CD4-positive, alpha-beta memory T cell (primary cell): ENCODE measurements at regions of chr4 and their contacts with region 1.

Region 1: DNA sequence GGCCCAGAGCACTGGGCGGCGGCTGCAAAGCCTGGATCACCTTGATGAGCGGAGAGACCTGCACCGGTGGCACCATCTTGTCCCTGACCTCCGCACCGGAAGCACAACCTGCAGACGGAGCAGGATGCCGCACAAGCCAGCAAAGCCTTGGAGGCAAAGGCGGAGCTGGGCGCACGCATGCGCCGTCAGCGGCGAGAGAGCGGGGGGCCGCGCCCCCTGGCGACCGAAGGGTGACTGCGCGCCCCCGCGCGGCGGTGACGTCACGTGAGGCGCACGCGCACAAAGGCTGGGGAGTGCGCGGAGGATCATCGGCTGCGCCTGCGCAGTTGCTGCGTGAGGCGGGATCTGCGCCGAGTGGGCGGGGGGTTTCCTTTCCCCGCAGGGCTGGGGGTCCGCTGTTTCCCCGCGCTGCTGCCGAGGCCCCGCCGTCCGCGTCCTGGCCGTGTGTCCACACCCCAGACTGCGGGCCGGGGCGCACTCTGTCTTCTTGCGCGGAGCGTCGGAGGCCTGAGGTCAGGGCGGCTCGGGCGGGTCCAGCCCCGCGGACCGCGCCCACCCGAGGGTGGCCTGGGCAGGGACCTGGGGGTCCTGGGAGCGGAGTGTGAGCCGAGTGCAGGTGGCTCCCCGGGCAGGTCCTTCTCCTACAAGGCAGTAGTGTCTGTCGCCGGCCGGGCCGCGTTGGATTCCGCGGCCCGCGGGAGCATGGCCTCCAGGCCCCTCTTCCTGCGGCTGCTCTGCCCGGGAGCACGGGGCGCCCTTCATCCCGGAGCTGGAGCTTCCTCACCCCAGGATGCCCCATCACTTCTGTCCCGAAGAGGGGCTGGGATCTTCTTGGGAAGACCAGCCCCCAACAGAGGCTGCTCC is at the starts of genes ATP5ME and MYL5:
- DNase-seq: peak; percentile 98 to 100 (median 98)
- H3K4me3 ChIP-seq: peak within 1 kb of the TSS; percentile 57 to 76
- H3K4me3 Mint-ChIP-seq: peak within 1 kb of the TSS; percentile 86 to 93 (median 90)
- H3K27ac ChIP-seq: peak within 1 kb of the TSS; percentile 99
- H3K27ac Mint-ChIP-seq: peak within 1 kb of the TSS; percentile 85 to 94 (median 92)
- H3K4me1 ChIP-seq: peaks cover 16% of the 10 kb centered on the region
- H3K4me1 Mint-ChIP-seq: peaks cover 2 to 18% (median 10%) of the 10 kb centered on the region in 4 donors
- H3K27me3 ChIP-seq: no peaks in the 10 kb centered on the region
- H3K27me3 Mint-ChIP-seq: no peaks in the 10 kb centered on the region
- total RNA-seq, gene ATP5ME: 137 to 152 TPM
- total RNA-seq, gene MYL5: 12.1 to 15.4 TPM

Region 2: GRCh38 chr4:337143-337931 is 337.1 kb before region 1 on chr4 and contains the start of gene ZNF141:
- CTCF ChIA-PET with region 1: no interaction called
- POLR2A ChIA-PET with region 1: no interaction called
- intact Hi-C with region 1: loop called (anchors 5 kb)
- DNase-seq: peak; percentile 90 to 97 (median 94)
- H3K4me3 ChIP-seq: peak within 1 kb of the TSS; percentile 68 to 99
- H3K4me3 Mint-ChIP-seq: peak within 1 kb of the TSS; percentile 96 to 100 (median 99)
- H3K27ac ChIP-seq: peak within 1 kb of the TSS; percentile 78
- H3K27ac Mint-ChIP-seq: peak within 1 kb of the TSS; percentile 98 to 99 (median 99)
- H3K4me1 ChIP-seq: peaks cover 15% of the 10 kb centered on the region
- H3K4me1 Mint-ChIP-seq: peaks cover 19 to 54% (median 35%) of the 10 kb centered on the region in 4 donors
- H3K27me3 ChIP-seq: no peaks in the 10 kb centered on the region
- H3K27me3 Mint-ChIP-seq: peaks cover 0 to 3% of the 10 kb centered on the region in 2 donors
- total RNA-seq, gene ZNF141: 55.2 to 59.6 TPM

Region 3: DNA sequence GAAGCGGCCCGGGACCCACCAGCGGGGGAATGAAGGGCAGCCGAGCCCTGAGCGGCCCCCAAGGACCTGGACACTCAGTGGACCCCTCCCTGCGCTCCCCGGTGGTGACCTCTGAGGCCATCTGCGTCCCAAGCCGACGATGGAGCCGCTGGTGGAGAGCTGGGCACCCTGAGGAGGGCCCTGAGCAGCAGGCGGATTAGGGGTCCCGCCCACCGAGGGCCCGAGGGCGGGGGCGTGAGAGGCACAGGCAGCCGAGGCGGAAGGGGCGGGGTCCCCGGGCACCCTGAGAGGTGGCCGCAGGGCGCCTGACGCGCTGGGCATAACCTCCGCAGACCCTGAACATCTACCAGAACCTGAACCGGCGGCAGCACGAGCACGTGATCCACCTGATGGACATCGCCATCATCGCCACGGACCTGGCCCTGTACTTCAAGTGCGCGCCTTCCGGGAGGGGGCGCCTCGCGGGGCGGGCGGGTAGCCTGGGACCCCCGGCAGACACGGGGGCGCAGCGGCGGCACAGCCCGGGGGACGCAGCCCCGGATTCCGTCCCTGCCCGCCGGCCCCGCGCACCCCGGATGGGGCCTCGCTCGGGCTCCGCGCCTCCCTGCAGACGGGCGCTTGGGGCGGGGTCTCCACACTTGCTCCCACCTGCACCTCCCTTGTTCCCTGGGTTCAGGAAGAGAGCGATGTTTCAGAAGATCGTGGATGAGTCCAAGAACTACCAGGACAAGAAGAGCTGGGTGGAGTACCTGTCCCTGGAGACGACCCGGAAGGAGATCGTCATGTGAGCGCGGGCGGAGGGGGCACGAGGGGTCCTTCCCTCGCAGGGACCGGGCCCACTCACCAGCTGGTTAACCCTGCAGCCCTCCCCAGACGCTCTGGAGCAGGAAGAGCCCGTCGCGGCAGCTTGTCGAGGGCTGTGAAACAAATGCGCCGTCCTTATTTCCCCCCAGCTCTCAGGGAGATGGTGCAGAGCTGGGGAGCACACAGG is 10.7 kb before region 1 on chr4:
- CTCF ChIA-PET with region 1: interaction called, 19 read pairs
- POLR2A ChIA-PET with region 1: interaction called, 57 read pairs
- intact Hi-C with region 1: loop called (anchors 1 kb)
- DNase-seq: peak; percentile 67 to 80 (median 70)
- H3K4me3 ChIP-seq: peak overlapping the region; percentile 61
- H3K4me3 Mint-ChIP-seq: peak overlapping the region; percentile 82 to 90 (median 86)
- H3K27ac ChIP-seq: peak overlapping the region; percentile 77
- H3K27ac Mint-ChIP-seq: peak overlapping the region; percentile 57 to 91 (median 88)
- H3K4me1 ChIP-seq: peaks cover 17% of the 10 kb centered on the region
- H3K4me1 Mint-ChIP-seq: peaks cover 6 to 22% (median 10%) of the 10 kb centered on the region in 4 donors
- H3K27me3 ChIP-seq: no peaks in the 10 kb centered on the region
- H3K27me3 Mint-ChIP-seq: no peaks in the 10 kb centered on the region

Region 4: GRCh38 chr4:726235-726787 is 51.9 kb after region 1 on chr4:
- CTCF ChIA-PET with region 1: no interaction called
- POLR2A ChIA-PET with region 1: no interaction called
- intact Hi-C with region 1: no loop called
- DNase-seq: no peak
- H3K4me3 ChIP-seq: no peak overlapping the region
- H3K4me3 Mint-ChIP-seq: no peak overlapping the region
- H3K27ac ChIP-seq: no peak overlapping the region
- H3K27ac Mint-ChIP-seq: peak overlapping the region in 2 of 7 donors; percentile 43 to 64
- H3K4me1 ChIP-seq: no peaks in the 10 kb centered on the region
- H3K4me1 Mint-ChIP-seq: peaks cover 4 to 23% (median 15%) of the 10 kb centered on the region in 4 donors
- H3K27me3 ChIP-seq: no peaks in the 10 kb centered on the region
- H3K27me3 Mint-ChIP-seq: no peaks in the 10 kb centered on the region

Region 5: GRCh38 chr4:742742-743311 is 68.4 kb after region 1 on chr4:
- CTCF ChIA-PET with region 1: no interaction called
- POLR2A ChIA-PET with region 1: no interaction called
- intact Hi-C with region 1: no loop called
- DNase-seq: peak; percentile 66 to 74 (median 67)
- H3K4me3 ChIP-seq: no peak overlapping the region
- H3K4me3 Mint-ChIP-seq: no peak overlapping the region
- H3K27ac ChIP-seq: no peak overlapping the region
- H3K27ac Mint-ChIP-seq: peak overlapping the region in 2 of 7 donors; percentile 30 to 48
- H3K4me1 ChIP-seq: no peaks in the 10 kb centered on the region
- H3K4me1 Mint-ChIP-seq: peaks cover 0 to 4% (median under 1%) of the 10 kb centered on the region in 4 donors
- H3K27me3 ChIP-seq: no peaks in the 10 kb centered on the region
- H3K27me3 Mint-ChIP-seq: no peaks in the 10 kb centered on the region

Region 6: GRCh38 chr4:931960-932712 is 257.7 kb after region 1 on chr4 and contains the starts of genes GAK and TMEM175:
- CTCF ChIA-PET with region 1: no interaction called
- POLR2A ChIA-PET with region 1: interaction called, 6 read pairs
- intact Hi-C with region 1: loop called (anchors 1 kb)
- DNase-seq: peak; percentile 93 to 98 (median 97)
- H3K4me3 ChIP-seq: peak within 1 kb of the TSS; percentile 82 to 94
- H3K4me3 Mint-ChIP-seq: peak within 1 kb of the TSS; percentile 91 to 99 (median 95)
- H3K27ac ChIP-seq: peak within 1 kb of the TSS; percentile 99
- H3K27ac Mint-ChIP-seq: peak within 1 kb of the TSS; percentile 90 to 99 (median 97)
- H3K4me1 ChIP-seq: peaks cover 45% of the 10 kb centered on the region
- H3K4me1 Mint-ChIP-seq: peaks cover 27 to 48% (median 37%) of the 10 kb centered on the region in 4 donors
- H3K27me3 ChIP-seq: no peaks in the 10 kb centered on the region
- H3K27me3 Mint-ChIP-seq: no peaks in the 10 kb centered on the region
- total RNA-seq, gene GAK: 185 to 188 TPM
- total RNA-seq, gene TMEM175: 45.7 to 52.3 TPM

Region 7: DNA sequence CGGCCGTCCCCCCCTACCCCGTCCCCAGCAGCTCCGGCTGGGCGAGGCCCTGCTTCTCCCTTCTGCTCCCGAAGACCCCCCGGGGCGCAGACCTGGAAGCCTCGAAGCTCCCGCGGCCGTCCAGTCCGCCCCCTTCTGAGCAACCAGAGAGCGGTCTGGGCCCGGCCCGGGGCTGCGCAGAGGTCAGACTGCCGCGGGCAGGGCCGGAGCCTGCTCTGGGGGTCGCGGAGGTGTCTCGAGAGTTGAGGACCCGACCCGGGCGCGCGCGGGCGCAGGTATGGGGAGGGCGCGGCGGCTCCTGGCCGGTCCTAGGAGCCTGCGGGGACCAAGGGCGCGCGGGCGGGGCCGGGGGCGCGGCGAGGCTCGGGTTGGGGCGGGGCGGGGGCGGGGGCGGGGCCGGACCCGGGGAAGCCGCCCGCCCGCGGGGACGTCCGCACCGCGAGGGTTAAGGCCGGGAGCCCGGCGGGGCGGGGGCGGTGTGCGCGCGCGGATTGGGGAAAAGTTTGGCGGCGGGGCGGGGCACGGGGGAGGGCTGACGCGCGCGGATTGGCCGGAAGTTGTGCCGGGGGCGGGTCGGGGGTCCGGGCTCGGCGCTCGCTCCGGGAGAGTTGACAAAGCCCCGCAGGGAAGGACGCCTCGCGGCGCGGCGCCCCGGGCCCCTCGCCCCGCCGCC is 336.8 kb after region 1 on chr4 and contains the start of gene FGFRL1:
- CTCF ChIA-PET with region 1: no interaction called
- POLR2A ChIA-PET with region 1: interaction called, 5 read pairs
- intact Hi-C with region 1: loop called (anchors 1 kb)
- DNase-seq: peak; percentile 86 to 90 (median 87)
- H3K4me3 ChIP-seq: peak within 1 kb of the TSS; percentile 22 to 75
- H3K4me3 Mint-ChIP-seq: peak within 1 kb of the TSS; percentile 85 to 94 (median 90)
- H3K27ac ChIP-seq: peak within 1 kb of the TSS; percentile 76
- H3K27ac Mint-ChIP-seq: peak within 1 kb of the TSS; percentile 94 to 98 (median 97)
- H3K4me1 ChIP-seq: peaks cover 25% of the 10 kb centered on the region
- H3K4me1 Mint-ChIP-seq: peaks cover 6 to 17% (median 13%) of the 10 kb centered on the region in 4 donors
- H3K27me3 ChIP-seq: peaks cover 7% of the 10 kb centered on the region
- H3K27me3 Mint-ChIP-seq: peaks cover 14 to 23% of the 10 kb centered on the region in 2 donors
- total RNA-seq, gene FGFRL1: 22.4 TPM

Region 8: DNA sequence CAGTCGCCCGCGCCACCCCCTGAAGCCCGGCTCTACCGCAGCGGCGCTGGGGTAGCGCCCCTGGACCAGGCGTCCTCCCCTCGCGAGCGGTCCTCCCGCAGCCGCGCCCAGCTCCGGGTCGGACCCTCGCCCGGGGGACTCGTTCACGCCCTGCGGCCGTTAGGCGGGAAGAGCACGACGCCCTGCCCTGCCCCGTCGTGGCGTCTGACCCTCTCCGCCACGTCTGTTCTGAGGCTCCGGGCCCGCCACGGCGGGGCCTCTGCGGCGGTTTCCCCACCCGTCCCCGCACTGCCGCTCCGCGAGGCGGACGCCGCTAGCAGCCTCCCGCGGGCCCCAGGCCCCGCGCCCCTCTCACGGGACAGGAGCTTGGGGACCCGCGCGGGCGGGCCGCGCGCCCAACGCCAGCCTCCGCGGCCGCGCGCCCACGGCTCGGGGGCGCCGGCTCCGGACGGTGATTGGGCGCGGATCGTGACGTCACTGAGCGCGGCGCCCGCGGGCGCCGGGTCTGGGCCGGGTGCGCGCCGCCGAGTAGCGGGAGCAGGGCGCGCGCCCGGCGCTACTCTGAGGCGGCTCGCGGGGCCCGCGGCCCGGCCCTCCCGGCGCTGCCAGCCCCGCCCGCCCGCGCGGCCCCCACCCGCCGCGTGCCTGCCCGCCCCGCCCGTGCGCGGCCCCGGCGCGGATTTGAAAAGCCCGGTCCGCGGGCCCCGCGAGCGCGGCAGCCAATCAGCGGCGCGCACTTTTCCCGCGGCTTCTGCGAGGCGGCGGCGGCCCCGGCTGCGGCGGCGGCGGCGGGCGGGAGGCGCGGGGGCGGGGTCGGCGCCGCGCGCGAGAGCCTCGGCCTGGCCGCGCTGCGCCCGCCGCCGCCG is 1196.4 kb after region 1 on chr4 and contains the start of gene NSD2:
- CTCF ChIA-PET with region 1: no interaction called
- POLR2A ChIA-PET with region 1: no interaction called
- intact Hi-C with region 1: no loop called
- DNase-seq: peak; percentile 84 to 89 (median 88)
- H3K4me3 ChIP-seq: peak within 1 kb of the TSS; percentile 47 to 84
- H3K4me3 Mint-ChIP-seq: peak within 1 kb of the TSS; percentile 86 to 97 (median 89)
- H3K27ac ChIP-seq: peak within 1 kb of the TSS; percentile 91
- H3K27ac Mint-ChIP-seq: peak within 1 kb of the TSS; percentile 95 to 99 (median 98)
- H3K4me1 ChIP-seq: peaks cover 36% of the 10 kb centered on the region
- H3K4me1 Mint-ChIP-seq: peaks cover 21 to 39% (median 32%) of the 10 kb centered on the region in 4 donors
- H3K27me3 ChIP-seq: no peaks in the 10 kb centered on the region
- H3K27me3 Mint-ChIP-seq: peaks cover 0 to 3% of the 10 kb centered on the region in 2 donors
- total RNA-seq, gene NSD2: 54.8 to 57.4 TPM